ENCODE measurements at regions of chr2 and their contacts with region 1.

Region 1: DNA sequence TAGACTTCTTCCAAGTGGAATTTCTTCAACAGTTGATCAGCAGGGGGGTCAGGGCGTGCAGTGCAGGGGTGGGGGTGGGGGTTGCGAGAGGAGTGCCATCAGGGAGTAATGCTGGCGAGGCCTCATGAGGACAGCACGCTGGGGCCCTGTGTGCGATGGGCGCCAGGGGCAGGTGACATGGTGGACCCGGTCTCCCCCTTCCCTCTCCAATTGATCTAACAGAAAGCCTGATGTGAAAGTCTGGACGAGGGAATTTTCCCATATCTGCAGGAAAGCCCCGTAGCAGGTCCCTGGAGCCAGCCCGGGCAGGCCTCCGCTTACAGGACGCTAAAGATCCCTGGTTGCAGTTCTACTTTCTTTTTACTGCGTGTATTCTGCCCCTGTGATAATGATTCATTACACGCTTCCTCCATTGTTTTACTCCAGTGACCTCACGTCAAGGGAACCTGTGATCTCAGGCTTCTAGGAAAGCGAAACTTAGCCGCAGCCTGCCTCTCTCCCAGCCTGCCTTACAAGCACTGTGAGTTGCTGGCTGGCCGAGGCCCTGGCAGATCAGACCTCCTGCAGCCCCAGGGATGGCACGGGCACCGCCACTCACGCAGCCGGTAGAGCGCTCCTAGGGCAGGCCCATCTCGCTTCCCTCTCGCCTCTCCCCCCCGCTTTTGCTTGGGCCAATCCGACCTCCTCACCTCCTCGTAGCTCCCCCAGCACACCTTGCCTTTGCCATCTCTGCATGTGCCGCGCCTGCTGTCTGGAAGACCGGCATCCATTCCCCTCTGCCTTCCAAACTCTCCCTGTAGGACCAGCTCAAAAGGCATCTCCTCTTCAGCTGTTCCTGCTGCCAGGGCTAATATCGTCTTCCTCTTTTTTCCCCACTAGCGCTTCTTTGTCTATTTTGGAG is 19.2 kb downstream of the NEURL3 start:
- DNase-seq: peak; percentile 87
- H3K4me3 Mint-ChIP-seq: peak overlapping the region; percentile 90
- H3K27ac Mint-ChIP-seq: peak overlapping the region; percentile 98
- H3K4me1 Mint-ChIP-seq: peaks cover 47% of the 10 kb centered on the region
- H3K27me3 Mint-ChIP-seq: no peaks in the 10 kb centered on the region

Region 2: DNA sequence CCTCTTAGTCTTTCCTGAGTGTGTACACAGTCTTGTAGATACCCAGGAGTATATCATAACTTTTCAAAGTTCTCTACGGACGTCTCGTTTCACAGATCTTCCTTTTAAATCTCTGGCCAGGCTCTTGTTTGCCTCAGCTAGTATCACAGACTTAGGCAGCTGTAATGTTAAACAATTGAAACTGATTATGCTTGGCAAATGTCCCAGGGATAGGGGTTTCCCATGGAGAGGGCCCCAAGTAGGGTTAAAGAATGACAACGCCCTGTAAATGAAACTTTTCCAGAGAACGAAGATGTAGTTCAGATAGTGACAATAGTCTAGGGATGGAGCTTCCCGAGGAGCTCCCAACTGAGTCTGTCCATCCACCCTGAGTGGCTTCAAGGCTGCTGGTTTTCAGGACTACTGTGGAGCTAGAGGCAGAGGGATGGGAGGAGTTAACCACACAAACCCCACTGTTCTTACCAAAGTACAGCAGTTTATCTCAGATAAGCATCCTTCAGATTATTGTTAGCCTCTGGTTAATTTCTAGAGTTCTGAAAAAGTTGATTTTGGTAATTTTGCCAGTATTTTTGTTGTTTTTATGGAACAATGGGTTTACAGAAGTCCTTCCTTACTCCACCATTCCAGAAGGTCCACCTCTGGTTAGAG is 10.1 kb after region 1 on chr2:
- intact Hi-C with region 1: loop called (anchors 1 kb)
- DNase-seq: no peak
- H3K4me3 Mint-ChIP-seq: no peak overlapping the region
- H3K27ac Mint-ChIP-seq: no peak overlapping the region
- H3K4me1 Mint-ChIP-seq: peaks cover 24% of the 10 kb centered on the region
- H3K27me3 Mint-ChIP-seq: no peaks in the 10 kb centered on the region

Region 3: DNA sequence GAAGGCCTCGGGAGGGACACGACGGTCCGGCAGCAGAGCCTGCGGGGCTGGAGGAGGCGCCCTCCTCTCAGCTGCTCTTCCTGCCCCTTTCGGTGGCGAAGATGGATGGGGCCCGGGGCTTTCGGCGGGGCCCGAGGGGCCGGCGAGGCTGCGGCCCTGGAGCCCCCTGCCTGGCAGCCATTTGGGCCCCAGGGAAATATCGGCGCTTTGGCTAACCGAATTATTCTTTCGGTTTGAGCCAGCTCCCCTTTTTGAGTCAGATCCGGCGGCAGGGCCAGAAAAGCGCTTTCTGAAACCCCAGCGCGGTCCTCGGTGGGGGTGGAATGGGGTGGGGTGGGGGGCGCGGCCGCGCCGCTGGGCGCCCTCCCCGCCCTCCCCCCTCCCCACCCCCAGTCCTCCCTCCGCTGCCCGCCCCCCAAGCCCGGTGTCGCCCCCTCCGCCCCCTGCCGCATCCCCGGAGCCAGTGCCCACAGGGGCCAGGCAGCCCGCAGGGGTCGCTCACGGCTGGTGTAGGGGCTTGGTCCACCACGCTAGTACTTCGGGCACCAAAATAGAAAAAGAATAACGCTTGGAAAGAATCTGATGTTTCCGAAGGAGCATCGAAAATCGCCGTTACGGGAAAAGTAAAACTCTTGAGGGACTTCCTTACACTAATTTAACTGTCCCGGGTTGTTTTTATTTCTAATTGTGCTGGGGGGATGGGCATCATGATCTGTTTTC is 41.4 kb after region 1 on chr2:
- intact Hi-C with region 1: loop called (anchors 1 kb)
- DNase-seq: peak; percentile 70
- H3K4me3 Mint-ChIP-seq: peak overlapping the region; percentile 66
- H3K27ac Mint-ChIP-seq: peak overlapping the region; percentile 88
- H3K4me1 Mint-ChIP-seq: peaks cover 91% of the 10 kb centered on the region
- H3K27me3 Mint-ChIP-seq: no peaks in the 10 kb centered on the region

Region 4: DNA sequence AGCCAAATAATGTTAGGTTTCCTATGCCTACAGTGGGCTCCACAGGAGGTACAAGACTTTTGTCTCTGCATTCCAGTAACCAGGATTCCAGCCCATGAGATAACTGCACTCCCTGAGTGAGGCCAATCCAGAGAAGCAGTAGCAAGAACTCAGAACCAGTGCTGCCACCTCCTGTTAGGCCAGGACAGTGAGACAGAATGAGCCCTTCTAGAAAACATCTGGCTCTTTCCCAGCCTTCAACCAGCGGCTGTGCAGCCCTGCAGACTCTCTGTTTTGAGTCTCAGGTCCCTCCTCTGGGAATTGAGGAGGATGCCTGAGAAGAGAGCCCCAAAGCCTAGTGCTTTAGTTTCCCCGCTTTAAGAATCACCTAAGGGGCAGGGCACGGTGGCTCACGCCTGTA is 94.8 kb after region 1 on chr2:
- intact Hi-C with region 1: no loop called
- DNase-seq: no peak
- H3K4me3 Mint-ChIP-seq: no peak overlapping the region
- H3K27ac Mint-ChIP-seq: no peak overlapping the region
- H3K4me1 Mint-ChIP-seq: peaks cover 2% of the 10 kb centered on the region
- H3K27me3 Mint-ChIP-seq: peaks cover 3% of the 10 kb centered on the region

Measured in activated T-helper 2 cell treated with anti-CD3 and anti-CD28 coated beads, Interferon-gamma antibody, Interleukin-2, Interleukin-4, amounts not matched to agents 10 μg/mL and 5 μg/mL and 100 μg/mL, durations not matched to agents 14 hours and 24 hours and 36 hours (primary cell).